ENCODE measurements at regions of chr5 and their contacts with region 1.

Region 1: DNA sequence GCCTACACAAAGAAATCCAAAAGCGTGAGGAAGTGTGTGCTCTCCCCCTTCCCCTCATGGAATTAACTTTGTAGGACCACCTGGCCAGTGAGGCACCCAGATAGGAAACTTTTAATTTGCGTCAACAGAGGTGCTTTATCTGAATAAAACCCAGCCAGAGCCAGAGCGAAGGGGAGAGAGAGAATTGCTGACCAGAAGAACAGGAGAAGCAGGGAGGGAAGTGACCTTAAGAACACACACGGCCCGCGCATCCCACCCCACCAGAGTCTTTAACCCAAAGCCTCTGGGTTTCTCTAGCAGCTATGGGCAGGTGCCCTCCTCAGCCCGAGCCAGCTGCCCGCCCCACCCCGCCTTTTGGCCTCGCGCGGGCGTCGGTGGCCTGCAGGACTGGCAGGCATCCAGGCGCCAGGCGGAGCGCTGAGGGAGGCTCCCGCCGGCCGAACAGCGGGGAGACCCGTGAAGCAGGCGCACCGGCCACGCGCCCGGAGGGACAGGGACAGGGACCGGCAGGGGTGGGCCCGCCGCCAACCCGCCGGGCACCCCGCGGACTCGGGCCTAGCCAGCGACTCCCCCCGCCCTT is 580 bp downstream of the ERAP1 start:
- DNase-seq: peak; percentile 69
- H3K4me3 ChIP-seq: peak overlapping the region; percentile 90 to 99
- H3K27ac ChIP-seq: peak overlapping the region; percentile 99 to 100
- H3K4me1 ChIP-seq: no peaks in the 10 kb centered on the region
- H3K27me3 ChIP-seq: no peaks in the 10 kb centered on the region
- CTCF ChIP-seq: peak in 2 of 4 experiments; percentile 5 to 22
- POLR2A ChIP-seq: no peak

Region 2: GRCh38 chr5:96752341-96753016 is 54.7 kb before region 1 on chr5:
- intact Hi-C with region 1: loop called (anchors 10 kb)
- DNase-seq: peak; percentile 52
- H3K4me3 ChIP-seq: no peak overlapping the region
- H3K27ac ChIP-seq: no peak overlapping the region
- H3K4me1 ChIP-seq: no peaks in the 10 kb centered on the region
- H3K27me3 ChIP-seq: no peaks in the 10 kb centered on the region
- CTCF ChIP-seq: peak; percentile 34 to 51 (median 49)
- POLR2A ChIP-seq: no peak

Region 3: GRCh38 chr5:97801497-97801896 is 994.3 kb after region 1 on chr5:
- intact Hi-C with region 1: no loop called
- DNase-seq: no peak
- H3K4me3 ChIP-seq: no peak overlapping the region
- H3K27ac ChIP-seq: no peak overlapping the region
- H3K4me1 ChIP-seq: no peaks in the 10 kb centered on the region
- H3K27me3 ChIP-seq: no peaks in the 10 kb centered on the region
- CTCF ChIP-seq: no peak
- POLR2A ChIP-seq: no peak

Measured in prostate gland (tissue), 2 donors.